H1 (cell line): ENCODE measurements at regions of chr11 and their contacts with region 1.

Region 1: DNA sequence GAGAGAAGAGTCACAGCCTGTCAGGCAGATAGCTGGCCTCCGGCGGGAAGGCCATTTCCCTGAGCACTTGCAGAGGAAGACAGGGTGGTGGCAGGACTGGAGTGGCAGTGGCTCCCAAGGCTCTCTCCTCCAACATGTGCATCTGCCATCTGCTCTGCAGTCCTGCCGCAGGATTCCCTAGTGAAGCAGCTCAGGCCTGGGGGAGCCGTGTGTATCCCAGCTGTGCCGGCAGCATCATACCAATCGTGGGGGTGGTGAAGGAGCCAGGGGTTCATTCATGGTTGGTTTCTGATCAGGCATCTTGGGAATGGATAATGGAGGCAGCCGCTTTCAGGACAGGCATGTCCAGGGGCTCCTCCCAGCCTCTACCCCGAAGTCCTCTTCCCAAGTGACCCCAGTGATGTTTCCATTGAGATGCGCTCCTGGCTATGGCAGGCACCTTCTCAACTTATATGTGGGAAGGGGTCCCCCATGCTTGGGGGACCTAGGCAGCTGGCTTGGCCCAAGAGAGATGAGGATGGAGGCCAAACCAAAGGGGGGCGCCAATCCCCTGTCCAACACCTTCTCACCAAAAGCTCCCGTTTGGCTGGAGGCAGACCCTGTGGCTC is 6.1 kb downstream of the TAGLN start:
- DNase-seq: peak in 1 of 2 experiments; percentile 56
- H3K4me3 ChIP-seq: no peak overlapping the region
- H3K27ac ChIP-seq: no peak overlapping the region
- H3K4me1 ChIP-seq: peaks cover 0 to 12% (median 8%) of the 10 kb centered on the region in 4 experiments; a peak in 6 of 7 replicates
- H3K27me3 ChIP-seq: no peaks in the 10 kb centered on the region; a peak in 1 of 7 replicates
- CTCF ChIP-seq: peak; percentile 9 to 27 (median 12); a peak in 3 of 4 replicates
- EP300 ChIP-seq: no peak
- POLR2A ChIP-seq: peak in 1 of 2 experiments; percentile 54; a peak in 2 of 3 replicates
- RAD21 ChIP-seq: peak in 1 of 2 experiments; percentile 29; a peak in 2 of 4 replicates

Region 2: GRCh38 chr11:117134431-117134830 is 70.9 kb before region 1 on chr11:
- CTCF ChIA-PET with region 1: interaction called, 13 read pairs
- POLR2A ChIA-PET with region 1: no interaction called
- DNase-seq: no peak
- H3K4me3 ChIP-seq: no peak overlapping the region
- H3K27ac ChIP-seq: no peak overlapping the region
- H3K4me1 ChIP-seq: no peaks in the 10 kb centered on the region
- H3K27me3 ChIP-seq: no peaks in the 10 kb centered on the region
- CTCF ChIP-seq: no peak
- EP300 ChIP-seq: no peak
- POLR2A ChIP-seq: no peak
- RAD21 ChIP-seq: no peak

Region 3: GRCh38 chr11:117160826-117161225 is 44.5 kb before region 1 on chr11:
- CTCF ChIA-PET with region 1: no interaction called
- POLR2A ChIA-PET with region 1: no interaction called
- DNase-seq: no peak
- H3K4me3 ChIP-seq: no peak overlapping the region
- H3K27ac ChIP-seq: no peak overlapping the region
- H3K4me1 ChIP-seq: no peaks in the 10 kb centered on the region
- H3K27me3 ChIP-seq: no peaks in the 10 kb centered on the region
- CTCF ChIP-seq: no peak
- EP300 ChIP-seq: no peak
- POLR2A ChIP-seq: no peak
- RAD21 ChIP-seq: no peak

Region 4: GRCh38 chr11:117220999-117221774 is 15.9 kb after region 1 on chr11:
- CTCF ChIA-PET with region 1: interaction called, 449 read pairs
- POLR2A ChIA-PET with region 1: interaction called, 17 read pairs
- DNase-seq: no peak
- H3K4me3 ChIP-seq: no peak overlapping the region
- H3K27ac ChIP-seq: no peak overlapping the region
- H3K4me1 ChIP-seq: no peaks in the 10 kb centered on the region
- H3K27me3 ChIP-seq: no peaks in the 10 kb centered on the region
- CTCF ChIP-seq: no peak
- EP300 ChIP-seq: no peak
- POLR2A ChIP-seq: no peak
- RAD21 ChIP-seq: no peak

Region 5: GRCh38 chr11:117395476-117396155 is 190.3 kb after region 1 on chr11:
- CTCF ChIA-PET with region 1: no interaction called
- POLR2A ChIA-PET with region 1: no interaction called
- DNase-seq: no peak
- H3K4me3 ChIP-seq: no peak overlapping the region
- H3K27ac ChIP-seq: no peak overlapping the region
- H3K4me1 ChIP-seq: no peaks in the 10 kb centered on the region
- H3K27me3 ChIP-seq: no peaks in the 10 kb centered on the region
- CTCF ChIP-seq: no peak
- EP300 ChIP-seq: no peak
- POLR2A ChIP-seq: no peak
- RAD21 ChIP-seq: no peak